CD4-positive, alpha-beta T cell (primary cell): ENCODE measurements at regions of chr17 and their contacts with region 1.

Region 1: DNA sequence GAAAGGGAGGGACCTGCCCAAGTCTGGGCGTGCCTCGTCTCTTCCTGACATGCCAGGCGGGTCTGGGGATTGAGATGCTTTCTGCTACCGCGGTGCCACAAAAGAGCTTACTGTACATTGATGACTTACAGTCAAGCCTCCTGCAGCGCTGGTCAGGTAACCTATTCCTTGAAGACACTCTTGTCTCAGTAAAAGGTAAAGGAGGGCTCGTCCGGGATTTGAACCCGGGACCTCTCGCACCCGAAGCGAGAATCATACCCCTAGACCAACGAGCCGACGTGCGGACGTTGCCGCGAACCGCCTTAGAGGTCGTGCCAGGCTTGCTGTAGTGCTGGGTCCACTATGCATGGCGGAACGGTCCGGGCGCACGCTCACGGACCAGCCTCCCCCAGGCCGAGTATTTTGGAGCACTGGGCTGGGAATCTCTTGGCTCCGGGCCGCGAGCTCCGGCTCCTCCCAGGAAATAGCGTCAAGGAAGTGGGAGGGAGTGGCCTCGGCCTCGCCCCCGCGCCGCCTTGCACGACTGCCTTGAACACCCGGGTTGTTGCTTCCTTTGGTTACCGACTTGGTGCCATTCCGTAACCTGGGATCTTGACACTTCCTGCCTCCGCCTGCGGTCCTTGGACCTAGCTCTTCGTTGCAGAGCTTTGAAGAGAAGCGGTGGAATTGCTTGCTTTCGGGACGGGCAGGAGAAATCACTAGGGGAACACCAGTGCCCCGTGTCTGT is 12.4 kb upstream of the AURKB start:
- DNase-seq: peak; percentile 82 to 94 (median 88)
- ATAC-seq: peak; percentile 48
- H3K4me3 ChIP-seq: peak overlapping the region; percentile 75
- H3K4me3 Mint-ChIP-seq: peak overlapping the region; percentile 98
- H3K27ac ChIP-seq: peak overlapping the region; percentile 89 to 95
- H3K27ac Mint-ChIP-seq: peak overlapping the region; percentile 99
- H3K4me1 ChIP-seq: peaks cover 75% of the 10 kb centered on the region
- H3K4me1 Mint-ChIP-seq: peaks cover 74% of the 10 kb centered on the region
- H3K27me3 ChIP-seq: no peaks in the 10 kb centered on the region
- H3K27me3 Mint-ChIP-seq: peaks cover 42% of the 10 kb centered on the region
- CTCF ChIP-seq: no peak

Region 2: DNA sequence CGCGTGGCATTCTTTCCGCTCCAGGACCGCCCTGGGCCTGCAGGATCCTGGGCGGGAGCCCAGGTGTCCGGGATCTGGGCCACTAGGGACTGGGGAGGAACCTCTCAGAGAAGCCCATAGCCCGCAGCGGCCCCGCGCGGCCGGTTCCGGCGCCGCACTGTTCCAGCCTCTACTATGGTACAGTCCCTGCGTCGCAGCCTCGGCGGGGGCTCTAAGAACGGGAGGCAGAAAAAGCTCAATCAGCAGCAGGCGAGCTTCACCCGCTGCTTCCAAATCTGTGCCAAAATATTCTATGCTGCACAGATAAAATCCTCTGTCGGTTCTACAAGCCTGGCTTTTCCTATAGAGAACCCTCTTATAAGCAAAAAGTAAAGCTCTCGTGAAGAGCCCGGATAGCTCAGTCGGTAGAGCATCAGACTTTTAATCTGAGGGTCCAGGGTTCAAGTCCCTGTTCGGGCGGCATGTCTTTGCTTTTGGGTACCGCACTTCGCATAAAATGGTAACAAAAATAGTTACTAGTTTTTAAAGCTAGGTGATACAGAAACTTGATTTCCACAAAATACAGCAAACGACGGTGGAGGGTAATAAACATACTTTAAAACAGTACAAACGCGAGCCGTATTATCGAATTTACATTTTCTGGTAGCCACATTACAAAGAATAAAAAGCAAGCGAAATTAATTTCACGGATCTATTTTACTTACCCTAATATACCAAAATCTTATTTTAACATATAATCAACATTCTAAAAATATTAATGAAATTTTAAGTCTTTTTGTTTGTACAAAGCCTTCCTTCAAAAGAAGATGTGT is 103.8 kb before region 1 on chr17:
- CTCF ChIA-PET with region 1: interaction called, 17 read pairs
- POLR2A ChIA-PET with region 1: interaction called, 161 read pairs
- intact Hi-C with region 1: loop called (anchors 1 to 2 kb)
- DNase-seq: peak; percentile 75 to 92 (median 81)
- ATAC-seq: peak; percentile 60
- H3K4me3 ChIP-seq: peak overlapping the region; percentile 57
- H3K4me3 Mint-ChIP-seq: peak overlapping the region; percentile 99
- H3K27ac ChIP-seq: peak overlapping the region; percentile 7 to 50
- H3K27ac Mint-ChIP-seq: peak overlapping the region; percentile 100
- H3K4me1 ChIP-seq: peaks cover 65% of the 10 kb centered on the region
- H3K4me1 Mint-ChIP-seq: peaks cover 53% of the 10 kb centered on the region
- H3K27me3 ChIP-seq: peaks cover 45 to 53% of the 10 kb centered on the region in 2 experiments
- H3K27me3 Mint-ChIP-seq: peaks cover 66% of the 10 kb centered on the region
- CTCF ChIP-seq: peak; percentile 81

Region 3: GRCh38 chr17:8156246-8156992 is 66.4 kb before region 1 on chr17:
- CTCF ChIA-PET with region 1: interaction called, 4 read pairs
- POLR2A ChIA-PET with region 1: interaction called, 135 read pairs
- intact Hi-C with region 1: loop called in 1 of 2 experiments (anchors 1 kb)
- DNase-seq: peak; percentile 99 to 100 (median 100)
- ATAC-seq: peak; percentile 70
- H3K4me3 ChIP-seq: peak overlapping the region; percentile 86
- H3K4me3 Mint-ChIP-seq: no peak overlapping the region
- H3K27ac ChIP-seq: peak overlapping the region; percentile 99 to 100
- H3K27ac Mint-ChIP-seq: no peak overlapping the region
- H3K4me1 ChIP-seq: peaks cover 88% of the 10 kb centered on the region
- H3K4me1 Mint-ChIP-seq: peaks cover 73% of the 10 kb centered on the region
- H3K27me3 ChIP-seq: no peaks in the 10 kb centered on the region
- H3K27me3 Mint-ChIP-seq: peaks cover 3% of the 10 kb centered on the region
- CTCF ChIP-seq: no peak

Region 4: GRCh38 chr17:8189711-8190477 is 32.9 kb before region 1 on chr17 and contains the start of gene BORCS6:
- CTCF ChIA-PET with region 1: interaction called, 30 read pairs
- POLR2A ChIA-PET with region 1: interaction called, 344 read pairs
- intact Hi-C with region 1: loop called (anchors 1 kb)
- DNase-seq: peak; percentile 84 to 99 (median 92)
- ATAC-seq: peak; percentile 68
- H3K4me3 ChIP-seq: peak within 1 kb of the TSS; percentile 93
- H3K4me3 Mint-ChIP-seq: no peak within 1 kb of the TSS
- H3K27ac ChIP-seq: peak within 1 kb of the TSS; percentile 83
- H3K27ac Mint-ChIP-seq: peak within 1 kb of the TSS; percentile 85
- H3K4me1 ChIP-seq: peaks cover 77% of the 10 kb centered on the region
- H3K4me1 Mint-ChIP-seq: peaks cover 12% of the 10 kb centered on the region
- H3K27me3 ChIP-seq: no peaks in the 10 kb centered on the region
- H3K27me3 Mint-ChIP-seq: no peaks in the 10 kb centered on the region
- CTCF ChIP-seq: no peak
- total RNA-seq, gene BORCS6: 6.1 to 6.4 TPM

Region 5: DNA sequence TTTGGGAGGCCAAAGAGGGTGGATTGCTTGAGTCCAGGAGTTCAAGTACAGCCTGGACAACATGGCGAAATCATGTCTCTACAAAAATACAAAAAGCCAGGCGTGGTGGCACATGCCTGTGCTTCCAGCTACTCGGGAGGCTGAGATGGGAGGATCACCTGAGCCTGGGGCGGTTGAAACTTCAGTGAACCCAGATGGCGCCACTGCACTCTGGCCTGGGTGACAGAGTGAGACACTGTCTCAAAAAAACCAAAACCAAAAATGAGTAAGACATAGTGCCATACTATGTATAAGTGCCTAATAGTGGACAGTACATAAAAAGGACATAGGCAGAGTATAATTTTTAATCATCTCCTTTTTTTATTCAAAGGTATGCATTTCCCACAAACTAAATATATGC is 21.0 kb after region 1 on chr17:
- CTCF ChIA-PET with region 1: interaction called, 14 read pairs
- POLR2A ChIA-PET with region 1: interaction called, 630 read pairs
- intact Hi-C with region 1: loop called (anchors 1 kb)
- DNase-seq: peak in 7 of 14 experiments; percentile 22 to 60 (median 37)
- ATAC-seq: no peak
- H3K4me3 ChIP-seq: no peak overlapping the region
- H3K4me3 Mint-ChIP-seq: peak overlapping the region; percentile 83
- H3K27ac ChIP-seq: peak overlapping the region in 1 of 2 donors; percentile 36
- H3K27ac Mint-ChIP-seq: peak overlapping the region; percentile 100
- H3K4me1 ChIP-seq: peaks cover 57% of the 10 kb centered on the region
- H3K4me1 Mint-ChIP-seq: peaks cover 66% of the 10 kb centered on the region
- H3K27me3 ChIP-seq: no peaks in the 10 kb centered on the region
- H3K27me3 Mint-ChIP-seq: peaks cover 3% of the 10 kb centered on the region
- CTCF ChIP-seq: peak; percentile 24

Region 6: GRCh38 chr17:8268550-8269298 is 45.9 kb after region 1 on chr17:
- CTCF ChIA-PET with region 1: no interaction called
- POLR2A ChIA-PET with region 1: no interaction called
- intact Hi-C with region 1: no loop called
- DNase-seq: no peak
- ATAC-seq: no peak
- H3K4me3 ChIP-seq: no peak overlapping the region
- H3K4me3 Mint-ChIP-seq: no peak overlapping the region
- H3K27ac ChIP-seq: no peak overlapping the region
- H3K27ac Mint-ChIP-seq: no peak overlapping the region
- H3K4me1 ChIP-seq: no peaks in the 10 kb centered on the region
- H3K4me1 Mint-ChIP-seq: no peaks in the 10 kb centered on the region
- H3K27me3 ChIP-seq: no peaks in the 10 kb centered on the region
- H3K27me3 Mint-ChIP-seq: no peaks in the 10 kb centered on the region
- CTCF ChIP-seq: no peak

Region 7: GRCh38 chr17:8294814-8295316 is 72.1 kb after region 1 on chr17:
- CTCF ChIA-PET with region 1: interaction called, 8 read pairs
- POLR2A ChIA-PET with region 1: interaction called, 66 read pairs
- intact Hi-C with region 1: loop called (anchors 1 kb)
- DNase-seq: no peak
- ATAC-seq: no peak
- H3K4me3 ChIP-seq: peak overlapping the region; percentile 72
- H3K4me3 Mint-ChIP-seq: peak overlapping the region; percentile 95
- H3K27ac ChIP-seq: peak overlapping the region; percentile 48 to 73
- H3K27ac Mint-ChIP-seq: peak overlapping the region; percentile 79
- H3K4me1 ChIP-seq: peaks cover 26% of the 10 kb centered on the region
- H3K4me1 Mint-ChIP-seq: peaks cover 39% of the 10 kb centered on the region
- H3K27me3 ChIP-seq: no peaks in the 10 kb centered on the region
- H3K27me3 Mint-ChIP-seq: no peaks in the 10 kb centered on the region
- CTCF ChIP-seq: no peak